CD8-positive, alpha-beta T cell (primary cell): ENCODE measurements at regions of chr15 and their contacts with region 1.

Region 1: GRCh38 chr15:89017370-89018066 is 70.7 kb upstream of the ABHD2 start:
- DNase-seq: peak; percentile 71 to 92 (median 86)
- ATAC-seq: peak; percentile 96
- H3K4me3 ChIP-seq: peak overlapping the region; percentile 19 to 22
- H3K4me3 Mint-ChIP-seq: peak overlapping the region; percentile 68
- H3K27ac ChIP-seq: no peak overlapping the region
- H3K27ac Mint-ChIP-seq: peak overlapping the region; percentile 18
- H3K4me1 ChIP-seq: peaks cover 9% of the 10 kb centered on the region
- H3K4me1 Mint-ChIP-seq: peaks cover 12% of the 10 kb centered on the region
- H3K27me3 ChIP-seq: no peaks in the 10 kb centered on the region
- H3K27me3 Mint-ChIP-seq: peaks cover 5% of the 10 kb centered on the region
- CTCF ChIP-seq: peak; percentile 58

Region 2: DNA sequence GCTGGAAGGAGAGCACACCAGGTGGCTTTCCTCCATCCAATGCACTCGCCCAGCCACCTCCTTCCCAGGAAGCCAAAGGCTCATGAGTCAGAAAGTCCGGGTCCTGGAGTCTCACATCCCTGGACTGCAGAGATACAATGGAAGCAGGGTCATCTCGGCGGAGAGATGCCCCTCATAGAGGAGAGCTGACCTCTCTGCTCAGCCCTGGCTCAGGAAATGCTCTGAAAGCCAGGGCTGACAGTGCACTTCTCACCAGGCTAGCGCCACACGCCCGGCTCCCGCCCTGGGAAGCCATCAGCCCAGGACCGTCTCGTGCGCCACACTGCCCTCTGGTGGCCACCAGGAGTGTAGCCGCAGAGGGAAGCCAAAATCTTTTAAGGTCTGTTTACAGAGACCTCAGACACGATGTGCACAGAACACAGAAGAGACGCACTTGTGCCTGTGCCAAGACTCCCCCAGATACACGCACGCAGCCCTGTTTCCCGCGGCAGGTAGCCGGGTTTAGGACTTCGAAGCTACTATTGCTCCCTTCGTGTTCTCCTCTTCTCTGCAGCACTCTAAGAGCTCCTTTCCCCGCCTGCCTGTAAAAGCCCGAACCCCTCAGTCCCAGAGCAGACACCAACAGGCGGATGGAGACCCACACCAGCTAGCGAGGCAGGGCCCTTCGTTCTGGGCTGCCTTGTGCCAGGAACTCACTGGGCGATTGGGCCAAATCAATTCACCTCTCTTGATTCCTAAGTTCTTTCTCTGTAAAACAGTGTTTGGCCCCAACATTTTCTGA is 770.7 kb before region 1 on chr15:
- CTCF ChIA-PET with region 1: no interaction called
- POLR2A ChIA-PET with region 1: no interaction called
- intact Hi-C with region 1: no loop called
- DNase-seq: peak; percentile 36 to 84 (median 73)
- ATAC-seq: peak; percentile 71
- H3K4me3 ChIP-seq: no peak overlapping the region
- H3K4me3 Mint-ChIP-seq: peak overlapping the region; percentile 15
- H3K27ac ChIP-seq: no peak overlapping the region
- H3K27ac Mint-ChIP-seq: no peak overlapping the region
- H3K4me1 ChIP-seq: no peaks in the 10 kb centered on the region
- H3K4me1 Mint-ChIP-seq: peaks cover 6% of the 10 kb centered on the region
- H3K27me3 ChIP-seq: no peaks in the 10 kb centered on the region
- H3K27me3 Mint-ChIP-seq: peaks cover 13% of the 10 kb centered on the region
- CTCF ChIP-seq: peak; percentile 76

Region 3: GRCh38 chr15:88890495-88890894 is 127.0 kb before region 1 on chr15:
- CTCF ChIA-PET with region 1: interaction called, 15 read pairs
- POLR2A ChIA-PET with region 1: interaction called, 3 read pairs
- intact Hi-C with region 1: loop called (anchors 1 kb)
- DNase-seq: no peak
- ATAC-seq: no peak
- H3K4me3 ChIP-seq: no peak overlapping the region
- H3K4me3 Mint-ChIP-seq: no peak overlapping the region
- H3K27ac ChIP-seq: no peak overlapping the region
- H3K27ac Mint-ChIP-seq: no peak overlapping the region
- H3K4me1 ChIP-seq: peaks cover 9% of the 10 kb centered on the region
- H3K4me1 Mint-ChIP-seq: peaks cover 17% of the 10 kb centered on the region
- H3K27me3 ChIP-seq: peaks cover 0 to 5% of the 10 kb centered on the region in 2 experiments
- H3K27me3 Mint-ChIP-seq: no peaks in the 10 kb centered on the region
- CTCF ChIP-seq: no peak

Region 4: DNA sequence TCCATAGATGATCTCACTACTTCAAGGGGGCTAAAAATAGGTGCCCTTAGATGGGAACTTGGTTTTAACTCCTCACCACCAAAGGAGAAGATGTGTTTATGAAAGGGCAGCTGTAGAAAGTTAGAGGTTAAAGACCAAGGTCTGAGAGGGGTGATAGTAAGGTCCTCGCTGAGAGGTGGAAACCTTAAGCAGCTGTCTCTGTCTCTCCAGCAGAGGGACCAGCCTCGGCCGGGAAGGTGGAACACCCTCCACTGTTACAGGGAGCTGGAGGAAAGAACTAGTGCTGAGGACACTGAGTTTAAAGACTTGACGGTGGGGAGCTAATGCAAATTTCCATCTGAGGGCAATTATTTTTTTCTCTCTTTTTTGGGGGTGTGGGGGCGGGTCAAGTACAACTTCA is 212.8 kb after region 1 on chr15:
- CTCF ChIA-PET with region 1: no interaction called
- POLR2A ChIA-PET with region 1: no interaction called
- intact Hi-C with region 1: no loop called
- DNase-seq: no peak
- ATAC-seq: no peak
- H3K4me3 ChIP-seq: no peak overlapping the region
- H3K4me3 Mint-ChIP-seq: no peak overlapping the region
- H3K27ac ChIP-seq: no peak overlapping the region
- H3K27ac Mint-ChIP-seq: no peak overlapping the region
- H3K4me1 ChIP-seq: no peaks in the 10 kb centered on the region
- H3K4me1 Mint-ChIP-seq: no peaks in the 10 kb centered on the region
- H3K27me3 ChIP-seq: no peaks in the 10 kb centered on the region
- H3K27me3 Mint-ChIP-seq: peaks cover 7% of the 10 kb centered on the region
- CTCF ChIP-seq: no peak

Region 5: DNA sequence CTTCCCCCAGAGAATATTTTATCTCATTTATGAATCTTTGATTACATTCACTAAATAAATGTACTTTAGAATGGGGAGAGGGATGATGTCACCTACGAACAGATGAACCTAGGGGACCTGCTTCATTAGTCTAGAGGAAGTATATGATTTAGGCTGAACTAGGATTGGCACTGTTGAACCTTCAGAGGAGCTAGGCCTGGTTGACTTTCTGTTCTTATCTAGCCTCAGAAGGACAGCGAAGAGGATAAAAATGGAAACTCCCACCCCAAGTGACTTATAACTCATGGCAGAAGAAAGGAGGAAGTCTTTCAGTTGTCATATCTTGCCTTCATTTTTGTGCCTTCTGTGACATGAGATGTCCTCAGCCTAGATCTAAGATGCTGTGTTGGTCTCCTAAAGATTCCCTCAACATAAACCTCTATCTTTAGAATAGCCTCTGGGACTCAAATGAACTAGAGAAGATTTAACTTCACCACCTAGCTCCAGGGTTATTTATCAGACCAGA is 274.5 kb after region 1 on chr15:
- CTCF ChIA-PET with region 1: no interaction called
- POLR2A ChIA-PET with region 1: no interaction called
- intact Hi-C with region 1: no loop called
- DNase-seq: no peak
- ATAC-seq: no peak
- H3K4me3 ChIP-seq: no peak overlapping the region
- H3K4me3 Mint-ChIP-seq: no peak overlapping the region
- H3K27ac ChIP-seq: no peak overlapping the region
- H3K27ac Mint-ChIP-seq: no peak overlapping the region
- H3K4me1 ChIP-seq: no peaks in the 10 kb centered on the region
- H3K4me1 Mint-ChIP-seq: no peaks in the 10 kb centered on the region
- H3K27me3 ChIP-seq: no peaks in the 10 kb centered on the region
- H3K27me3 Mint-ChIP-seq: no peaks in the 10 kb centered on the region
- CTCF ChIP-seq: no peak